Activated B cell treated with CpG ODN at 0.5 μM for 24 hours (primary cell): ENCODE measurements at regions of chr14 and their contacts with region 1.

Region 1: GRCh38 chr14:54175298-54175942 is 218.8 kb upstream of the BMP4 start:
- DNase-seq: no peak
- ATAC-seq: no peak
- H3K4me3 Mint-ChIP-seq: no peak overlapping the region
- H3K27ac Mint-ChIP-seq: no peak overlapping the region
- H3K4me1 Mint-ChIP-seq: no peaks in the 10 kb centered on the region
- H3K27me3 Mint-ChIP-seq: peaks cover 10% of the 10 kb centered on the region
- CTCF ChIP-seq: peak; percentile 66

Region 2: DNA sequence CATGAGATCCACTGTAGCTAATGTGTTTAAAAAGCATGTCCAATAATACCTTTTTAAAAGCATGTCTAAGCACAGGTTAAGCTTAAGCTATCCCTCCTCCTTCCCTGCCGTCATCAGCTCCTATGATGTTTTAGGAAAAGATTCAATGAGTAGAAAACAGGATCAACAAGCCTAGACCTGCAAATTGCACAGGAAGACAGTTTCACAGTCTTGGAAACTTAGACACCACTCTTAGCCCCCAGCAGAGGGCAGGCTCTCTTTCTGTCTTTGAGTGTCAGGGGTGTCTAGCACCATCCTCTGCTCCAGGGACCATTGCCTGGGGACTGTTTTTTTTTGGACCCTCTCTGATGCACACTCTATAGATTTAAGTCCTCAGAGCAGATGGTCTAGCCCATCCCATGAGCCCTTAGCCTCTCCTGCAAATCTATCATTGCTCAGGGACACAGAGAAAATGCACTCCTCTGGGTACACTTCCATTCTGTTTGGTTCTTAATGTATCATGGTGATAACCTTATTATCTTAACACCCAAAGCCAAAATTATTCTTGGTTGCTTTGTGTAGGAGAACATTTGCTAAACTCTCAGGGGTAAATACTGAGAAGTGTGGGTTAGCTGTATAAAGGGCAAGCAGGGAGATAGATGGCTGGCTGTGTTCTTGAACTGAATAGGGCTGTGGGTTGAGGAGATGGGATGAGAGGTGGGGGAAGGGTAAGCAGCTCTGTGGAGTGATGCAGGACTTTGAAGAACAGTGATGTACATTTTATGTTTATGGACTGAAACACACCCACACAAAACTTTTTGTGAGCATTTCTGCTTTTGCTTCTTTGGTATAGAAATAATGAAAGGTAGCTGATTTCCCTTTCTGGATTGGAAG is 762.4 kb before region 1 on chr14:
- CTCF ChIA-PET with region 1: no interaction called
- POLR2A ChIA-PET with region 1: no interaction called
- intact Hi-C with region 1: loop called (anchors 1 kb)
- DNase-seq: no peak
- ATAC-seq: no peak
- H3K4me3 Mint-ChIP-seq: no peak overlapping the region
- H3K27ac Mint-ChIP-seq: no peak overlapping the region
- H3K4me1 Mint-ChIP-seq: no peaks in the 10 kb centered on the region
- H3K27me3 Mint-ChIP-seq: no peaks in the 10 kb centered on the region
- CTCF ChIP-seq: no peak

Region 3: GRCh38 chr14:53432378-53432802 is 743.0 kb before region 1 on chr14:
- CTCF ChIA-PET with region 1: interaction called, 17 read pairs
- POLR2A ChIA-PET with region 1: no interaction called
- intact Hi-C with region 1: loop called (anchors 1 kb)
- DNase-seq: no peak
- ATAC-seq: peak; percentile 50
- H3K4me3 Mint-ChIP-seq: no peak overlapping the region
- H3K27ac Mint-ChIP-seq: no peak overlapping the region
- H3K4me1 Mint-ChIP-seq: no peaks in the 10 kb centered on the region
- H3K27me3 Mint-ChIP-seq: no peaks in the 10 kb centered on the region
- CTCF ChIP-seq: no peak

Region 4: DNA sequence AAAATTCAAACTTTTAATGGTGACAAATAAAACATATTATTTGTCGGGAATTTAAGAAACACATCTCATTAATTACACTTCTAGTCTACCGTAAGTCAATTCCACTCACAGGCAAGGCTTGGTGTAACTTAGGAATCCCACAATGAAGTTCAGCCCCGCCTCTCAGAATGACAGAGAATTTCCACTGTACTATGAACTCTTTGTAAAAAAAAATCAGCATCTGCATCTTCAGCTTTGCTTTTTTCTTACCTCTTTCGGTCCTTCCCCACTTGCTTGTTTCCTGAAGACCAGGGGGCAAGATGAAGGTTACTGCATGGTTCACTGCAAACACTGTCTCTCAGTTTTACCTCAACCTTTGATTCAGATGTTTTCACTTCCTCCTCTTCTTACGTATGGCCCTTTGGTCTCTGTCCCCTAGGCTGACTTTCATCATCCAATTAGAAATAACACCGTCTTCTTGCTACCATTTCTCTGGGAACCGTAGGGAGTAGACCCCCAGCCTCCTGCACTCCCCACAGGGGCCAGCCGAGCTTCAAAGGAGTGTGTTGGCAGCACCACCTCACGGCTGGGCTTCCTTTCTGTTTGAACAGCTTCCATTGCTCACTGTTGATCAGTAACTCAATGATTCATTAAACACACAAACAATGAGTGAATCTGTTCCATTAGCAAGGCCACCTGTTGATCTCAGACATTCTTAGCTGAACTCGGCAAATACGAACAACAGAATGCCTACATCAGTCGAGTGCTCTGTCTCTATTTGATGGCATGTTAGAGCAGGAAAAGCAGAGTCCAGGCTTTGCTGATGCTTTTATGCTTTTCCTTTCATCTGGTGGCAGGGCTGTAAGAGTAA is 561.8 kb before region 1 on chr14:
- CTCF ChIA-PET with region 1: no interaction called
- POLR2A ChIA-PET with region 1: no interaction called
- intact Hi-C with region 1: loop called (anchors 1 kb)
- DNase-seq: peak; percentile 59
- ATAC-seq: peak; percentile 93
- H3K4me3 Mint-ChIP-seq: peak overlapping the region; percentile 79
- H3K27ac Mint-ChIP-seq: peak overlapping the region; percentile 100
- H3K4me1 Mint-ChIP-seq: peaks cover 53% of the 10 kb centered on the region
- H3K27me3 Mint-ChIP-seq: no peaks in the 10 kb centered on the region
- CTCF ChIP-seq: no peak

Region 5: DNA sequence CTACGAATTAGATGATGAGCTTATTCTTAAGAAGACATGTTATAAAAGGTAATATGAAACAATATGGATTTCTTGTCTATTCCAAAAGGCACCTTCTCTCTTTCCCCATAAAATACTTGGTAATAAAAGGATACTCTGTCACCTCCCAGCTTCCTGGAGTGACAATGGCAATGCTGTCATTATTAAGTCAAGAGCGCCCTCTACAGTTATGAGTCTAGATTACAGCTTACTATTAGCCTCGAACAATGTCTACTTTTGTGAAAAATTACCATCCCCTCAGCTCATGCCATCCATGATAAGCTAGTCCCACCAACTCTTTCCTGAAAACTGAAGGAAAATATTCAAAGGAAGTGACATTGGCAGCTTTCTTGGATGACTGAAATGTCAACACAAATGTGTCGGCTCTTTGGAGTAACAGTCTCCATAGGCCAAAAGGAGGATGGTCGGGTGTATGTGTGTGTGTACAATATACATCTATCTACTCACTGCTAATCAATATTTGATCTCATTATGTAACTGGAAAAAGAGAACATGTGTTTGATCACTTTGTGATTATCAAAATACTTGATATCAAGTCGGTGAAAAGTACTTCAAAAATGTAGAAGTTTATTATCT is 172.7 kb after region 1 on chr14:
- CTCF ChIA-PET with region 1: interaction called, 6 read pairs
- POLR2A ChIA-PET with region 1: no interaction called
- intact Hi-C with region 1: loop called (anchors 1 kb)
- DNase-seq: no peak
- ATAC-seq: peak; percentile 21
- H3K4me3 Mint-ChIP-seq: no peak overlapping the region
- H3K27ac Mint-ChIP-seq: no peak overlapping the region
- H3K4me1 Mint-ChIP-seq: peaks cover 5% of the 10 kb centered on the region
- H3K27me3 Mint-ChIP-seq: peaks cover 4% of the 10 kb centered on the region
- CTCF ChIP-seq: no peak